ACHN (cell line): ENCODE measurements at regions of chr12 and their contacts with region 1.

Region 1: DNA sequence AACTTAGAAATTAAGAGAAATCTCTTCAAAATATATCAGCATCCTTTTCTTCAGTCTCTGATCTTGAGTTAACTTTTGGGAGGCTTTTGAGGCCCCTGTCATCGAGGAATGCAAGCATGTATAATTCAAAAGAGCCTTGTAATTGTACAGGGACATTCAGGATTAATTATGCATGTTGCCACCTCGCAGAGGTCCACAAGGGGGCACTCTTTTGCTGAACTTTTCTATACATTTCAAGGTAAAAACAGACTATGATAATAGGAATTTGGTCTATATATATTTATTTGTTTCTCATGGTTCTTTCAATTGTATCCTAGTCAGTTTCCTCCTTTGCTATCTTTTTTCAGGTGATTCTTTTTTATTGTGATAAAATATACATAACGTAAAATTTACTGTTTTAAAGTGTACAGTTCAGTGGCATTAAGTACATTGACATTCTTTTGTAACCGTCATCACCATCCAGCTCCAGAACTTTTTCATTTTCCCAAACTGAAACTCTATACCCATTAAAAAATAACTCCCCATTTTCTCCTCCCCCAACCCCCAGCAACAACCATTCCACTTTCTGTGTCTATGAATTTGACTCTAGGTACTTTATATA is 47.0 kb upstream of the SLC2A13 start:
- DNase-seq: peak; percentile 66

Region 2: GRCh38 chr12:40312982-40313576 is 160.2 kb after region 1 on chr12:
- in situ Hi-C with region 1: loop called (anchors 25 kb)
- DNase-seq: peak; percentile 55